Stomach (tissue), 19 donors: ENCODE measurements at regions of chr1 and their contacts with region 1.

Region 1: GRCh38 chr1:94335950-94336349 is 82.2 kb upstream of the ABCD3 start:
- DNase-seq: peak; percentile 73 to 95
- H3K4me3 ChIP-seq: no peak overlapping the region
- H3K27ac ChIP-seq: no peak overlapping the region
- H3K4me1 ChIP-seq: peaks cover 0 to 25% (median 10%) of the 10 kb centered on the region in 4 donors
- H3K27me3 ChIP-seq: no peaks in the 10 kb centered on the region
- CTCF ChIP-seq: peak in 5 of 7 experiments; percentile 64 to 98 (median 75)
- EP300 ChIP-seq: no peak
- POLR2A ChIP-seq: no peak

Region 2: GRCh38 chr1:93960641-93961147 is 375.3 kb before region 1 on chr1:
- intact Hi-C with region 1: no loop called
- DNase-seq: no peak
- H3K4me3 ChIP-seq: no peak overlapping the region
- H3K27ac ChIP-seq: no peak overlapping the region
- H3K4me1 ChIP-seq: no peaks in the 10 kb centered on the region
- H3K27me3 ChIP-seq: no peaks in the 10 kb centered on the region
- CTCF ChIP-seq: no peak
- EP300 ChIP-seq: no peak
- POLR2A ChIP-seq: no peak

Region 3: DNA sequence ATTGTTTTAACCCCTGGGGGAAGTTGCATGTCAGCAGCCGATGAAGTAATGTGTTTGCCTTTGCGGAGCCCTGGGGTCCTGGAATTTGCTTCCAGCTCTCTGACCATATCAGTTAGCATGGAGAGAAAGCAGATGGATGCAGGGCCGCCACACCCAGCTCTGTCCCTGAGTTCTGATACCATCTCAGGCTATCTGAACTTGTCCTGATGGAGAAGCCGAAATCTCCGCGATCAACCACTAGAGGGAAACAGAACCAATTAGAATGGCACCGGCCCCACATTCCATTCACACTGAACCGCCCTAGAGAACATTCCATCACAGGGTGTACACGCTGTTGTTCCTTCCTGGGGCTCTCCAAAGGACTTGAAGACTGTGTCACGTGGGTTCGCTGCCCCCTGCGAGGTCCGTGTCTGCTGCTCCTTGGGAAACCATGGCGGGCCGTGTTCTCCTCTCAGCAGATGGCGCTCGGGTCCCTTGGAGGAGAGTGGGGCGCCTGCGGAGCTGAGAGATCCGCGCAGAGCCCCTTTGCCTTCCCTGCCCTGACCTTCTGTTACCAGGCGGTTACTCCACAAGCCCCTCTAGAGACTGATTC is 290.4 kb before region 1 on chr1:
- intact Hi-C with region 1: loop called (anchors 5 kb)
- DNase-seq: peak; percentile 83 to 94
- H3K4me3 ChIP-seq: peak overlapping the region in 3 of 4 donors; percentile 13 to 23 (median 15)
- H3K27ac ChIP-seq: peak overlapping the region in 4 of 5 donors; percentile 60 to 76 (median 72)
- H3K4me1 ChIP-seq: peaks cover 6 to 27% (median 21%) of the 10 kb centered on the region in 4 donors
- H3K27me3 ChIP-seq: no peaks in the 10 kb centered on the region
- CTCF ChIP-seq: peak in 5 of 7 experiments; percentile 43 to 76 (median 72)
- EP300 ChIP-seq: no peak
- POLR2A ChIP-seq: no peak

Region 4: GRCh38 chr1:94463765-94464330 is 127.9 kb after region 1 on chr1:
- intact Hi-C with region 1: loop called (anchors 5 kb)
- DNase-seq: peak in 1 of 2 donors; percentile 51
- H3K4me3 ChIP-seq: no peak overlapping the region
- H3K27ac ChIP-seq: peak overlapping the region in 4 of 5 donors; percentile 24 to 50 (median 38)
- H3K4me1 ChIP-seq: peaks cover 0 to 31% (median 21%) of the 10 kb centered on the region in 4 donors
- H3K27me3 ChIP-seq: no peaks in the 10 kb centered on the region
- CTCF ChIP-seq: peak in 5 of 7 experiments; percentile 32 to 74 (median 58)
- EP300 ChIP-seq: no peak
- POLR2A ChIP-seq: no peak